GM18951 (cell line): ENCODE measurements at regions of chr11 and their contacts with region 1.

Region 1: DNA sequence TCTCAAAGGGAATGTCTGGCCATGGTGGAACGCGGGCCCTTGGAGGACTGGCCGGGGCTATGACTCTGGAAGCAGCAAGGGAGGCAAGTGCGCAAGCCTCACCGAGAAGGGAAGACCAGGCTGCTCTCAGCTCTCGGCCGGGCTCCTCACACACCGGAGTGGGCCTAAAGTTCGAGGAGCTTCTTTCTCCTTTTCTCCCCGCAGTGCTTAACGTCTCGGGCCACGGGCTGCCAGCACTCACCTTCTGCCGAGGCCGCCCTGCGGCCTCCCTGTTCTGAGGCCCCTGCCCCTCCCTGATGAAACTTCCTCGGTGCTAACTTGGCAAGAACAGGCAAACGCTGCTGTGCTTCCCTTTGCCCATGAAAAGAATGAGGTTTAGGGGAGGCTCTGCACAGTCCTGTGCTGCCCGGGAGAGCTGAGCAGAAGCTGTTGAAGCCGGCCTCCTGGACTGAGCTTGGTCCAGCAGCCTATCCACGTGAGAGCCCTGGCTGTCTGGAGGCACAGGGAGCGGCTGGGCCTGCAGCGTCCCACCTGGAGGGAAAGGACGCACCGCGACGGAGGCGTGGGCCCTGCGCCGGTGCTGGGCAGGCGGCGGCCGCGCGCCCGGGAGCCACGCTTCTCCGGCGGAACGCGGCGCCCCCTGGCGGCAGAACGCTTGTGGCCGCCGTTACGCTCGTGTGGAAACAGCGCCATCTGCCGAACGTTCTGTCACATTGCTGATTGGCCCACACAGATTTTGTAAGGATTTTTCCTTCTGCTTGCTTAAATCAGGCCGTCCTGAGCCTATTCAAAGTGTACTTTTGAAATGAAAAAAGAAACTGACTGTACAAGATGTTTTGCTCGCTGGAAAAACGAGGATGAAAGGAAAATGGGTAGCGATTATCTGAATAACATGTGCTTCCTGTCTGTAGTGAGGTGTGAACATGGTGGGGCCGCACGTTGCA is 65.0 kb upstream of the TMEM45B start:
- POLR2A ChIP-seq: no peak

Region 2: DNA sequence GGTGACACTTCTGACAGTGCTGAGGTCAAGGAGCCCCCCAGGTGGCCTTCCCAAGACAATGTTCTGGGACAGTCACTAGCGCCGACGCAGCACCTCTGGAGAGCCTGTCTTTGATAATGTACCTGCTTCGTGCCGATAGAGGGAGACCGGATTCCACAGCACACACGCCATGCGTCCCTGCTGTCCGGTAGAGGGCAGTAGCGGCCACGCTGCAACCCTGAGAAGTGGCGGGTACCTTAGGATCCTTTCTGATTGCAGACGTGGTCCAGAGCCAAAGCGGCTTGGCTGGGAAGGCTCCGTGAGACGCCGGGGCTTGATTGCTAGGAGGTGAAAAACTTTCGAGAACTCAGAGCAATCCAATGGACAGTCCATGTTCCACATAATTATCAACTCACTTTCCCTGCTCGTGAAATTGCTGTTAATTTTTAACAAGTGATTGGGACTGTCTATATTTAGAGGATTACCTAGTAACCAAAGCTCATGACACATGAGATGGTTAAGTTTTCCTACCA is 386.4 kb before region 1 on chr11:
- in situ Hi-C with region 1: loop called (anchors 25 kb)
- POLR2A ChIP-seq: no peak